ENCODE measurements at regions of chr16 and their contacts with region 1.

Region 1: GRCh38 chr16:20849587-20850390 is 43.5 kb downstream of the REXO5 start:
- DNase-seq: peak; percentile 45 to 67 (median 60)
- ATAC-seq: peak in 1 of 4 donors; percentile 32
- H3K4me3 ChIP-seq: no peak overlapping the region
- H3K27ac ChIP-seq: peak overlapping the region; percentile 53 to 88 (median 79)
- H3K4me1 ChIP-seq: peaks cover 9 to 65% (median 46%) of the 10 kb centered on the region in 12 donors
- H3K27me3 ChIP-seq: no peaks in the 10 kb centered on the region
- CTCF ChIP-seq: peak; percentile 93 to 99 (median 98)
- POLR2A ChIP-seq: no peak

Region 2: DNA sequence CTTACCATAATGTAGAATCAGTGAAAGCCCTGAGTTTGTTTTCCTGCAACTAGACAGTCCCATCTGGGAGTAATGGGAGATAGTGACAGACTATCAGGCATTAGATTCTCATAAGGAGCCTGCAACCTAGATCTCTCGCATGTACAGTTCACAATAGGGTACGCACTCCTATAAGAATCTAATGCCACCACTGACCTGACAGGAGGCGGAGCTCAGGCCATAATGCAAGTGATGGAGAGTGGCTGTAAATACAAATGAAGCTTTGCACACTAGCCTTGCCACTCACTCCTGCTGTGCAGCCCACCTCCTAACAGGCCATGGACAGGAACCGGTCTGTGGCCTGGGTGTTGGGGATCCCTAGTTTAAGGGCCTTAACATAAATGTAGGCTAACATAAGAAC is 129.5 kb before region 1 on chr16:
- intact Hi-C with region 1: no loop called
- DNase-seq: no peak
- ATAC-seq: no peak
- H3K4me3 ChIP-seq: no peak overlapping the region
- H3K27ac ChIP-seq: no peak overlapping the region
- H3K4me1 ChIP-seq: no peaks in the 10 kb centered on the region
- H3K27me3 ChIP-seq: no peaks in the 10 kb centered on the region
- CTCF ChIP-seq: no peak
- POLR2A ChIP-seq: no peak

Region 3: GRCh38 chr16:20774703-20775362 is 75.0 kb before region 1 on chr16:
- intact Hi-C with region 1: no loop called
- DNase-seq: peak; percentile 25 to 66 (median 41)
- ATAC-seq: peak in 3 of 4 donors; percentile 81 to 88 (median 86)
- H3K4me3 ChIP-seq: no peak overlapping the region
- H3K27ac ChIP-seq: no peak overlapping the region
- H3K4me1 ChIP-seq: no peaks in the 10 kb centered on the region
- H3K27me3 ChIP-seq: no peaks in the 10 kb centered on the region
- CTCF ChIP-seq: peak; percentile 33 to 58 (median 48)
- POLR2A ChIP-seq: no peak

Region 4: GRCh38 chr16:20806168-20807050 is 43.4 kb before region 1 on chr16 and contains the starts of genes ERI2 and REXO5:
- intact Hi-C with region 1: loop called in 3 of 10 experiments (anchors 2 to 5 kb)
- DNase-seq: peak; percentile 89 to 95 (median 93)
- ATAC-seq: peak; percentile 91 to 95 (median 94)
- H3K4me3 ChIP-seq: peak within 1 kb of the TSS; percentile 43 to 87 (median 74)
- H3K27ac ChIP-seq: peak within 1 kb of the TSS; percentile 86 to 97 (median 92)
- H3K4me1 ChIP-seq: peaks cover 0 to 25% (median 11%) of the 10 kb centered on the region in 12 donors
- H3K27me3 ChIP-seq: no peaks in the 10 kb centered on the region
- CTCF ChIP-seq: peak in 11 of 12 donors; percentile 23 to 62 (median 43)
- POLR2A ChIP-seq: peak in 1 of 2 donors; percentile 54
- total RNA-seq, gene ERI2: 5.7 to 15.2 (median 11.9) TPM
- total RNA-seq, gene REXO5: 2.8 to 7.5 (median 4.8) TPM

Region 5: GRCh38 chr16:20944861-20945574 is 95.2 kb after region 1 on chr16:
- intact Hi-C with region 1: loop called in 4 of 10 experiments (anchors 1 to 10 kb)
- DNase-seq: no peak
- ATAC-seq: peak in 2 of 4 donors; percentile 24 to 45
- H3K4me3 ChIP-seq: no peak overlapping the region
- H3K27ac ChIP-seq: no peak overlapping the region
- H3K4me1 ChIP-seq: peaks cover 0 to 15% (median 0%) of the 10 kb centered on the region in 12 donors
- H3K27me3 ChIP-seq: no peaks in the 10 kb centered on the region
- CTCF ChIP-seq: peak in 4 of 12 donors; percentile 11 to 34 (median 22)
- POLR2A ChIP-seq: no peak

Region 6: GRCh38 chr16:21083729-21084268 is 234.0 kb after region 1 on chr16:
- intact Hi-C with region 1: loop called (anchors 1 to 2 kb)
- DNase-seq: peak; percentile 62 to 76 (median 67)
- ATAC-seq: peak; percentile 83 to 98 (median 92)
- H3K4me3 ChIP-seq: no peak overlapping the region
- H3K27ac ChIP-seq: peak overlapping the region in 1 of 12 donors; percentile 17
- H3K4me1 ChIP-seq: peaks cover 0 to 5% (median 1%) of the 10 kb centered on the region in 12 donors
- H3K27me3 ChIP-seq: no peaks in the 10 kb centered on the region
- CTCF ChIP-seq: peak; percentile 66 to 84 (median 79)
- POLR2A ChIP-seq: no peak

Region 7: GRCh38 chr16:21101631-21102420 is 252.0 kb after region 1 on chr16:
- intact Hi-C with region 1: no loop called
- DNase-seq: peak in 2 of 5 donors; percentile 13 to 47
- ATAC-seq: peak in 3 of 4 donors; percentile 77 to 83 (median 79)
- H3K4me3 ChIP-seq: no peak overlapping the region
- H3K27ac ChIP-seq: no peak overlapping the region
- H3K4me1 ChIP-seq: peaks cover 0 to 9% (median 0%) of the 10 kb centered on the region in 12 donors
- H3K27me3 ChIP-seq: no peaks in the 10 kb centered on the region
- CTCF ChIP-seq: peak in 10 of 12 donors; percentile 22 to 59 (median 38)
- POLR2A ChIP-seq: no peak

Region 8: DNA sequence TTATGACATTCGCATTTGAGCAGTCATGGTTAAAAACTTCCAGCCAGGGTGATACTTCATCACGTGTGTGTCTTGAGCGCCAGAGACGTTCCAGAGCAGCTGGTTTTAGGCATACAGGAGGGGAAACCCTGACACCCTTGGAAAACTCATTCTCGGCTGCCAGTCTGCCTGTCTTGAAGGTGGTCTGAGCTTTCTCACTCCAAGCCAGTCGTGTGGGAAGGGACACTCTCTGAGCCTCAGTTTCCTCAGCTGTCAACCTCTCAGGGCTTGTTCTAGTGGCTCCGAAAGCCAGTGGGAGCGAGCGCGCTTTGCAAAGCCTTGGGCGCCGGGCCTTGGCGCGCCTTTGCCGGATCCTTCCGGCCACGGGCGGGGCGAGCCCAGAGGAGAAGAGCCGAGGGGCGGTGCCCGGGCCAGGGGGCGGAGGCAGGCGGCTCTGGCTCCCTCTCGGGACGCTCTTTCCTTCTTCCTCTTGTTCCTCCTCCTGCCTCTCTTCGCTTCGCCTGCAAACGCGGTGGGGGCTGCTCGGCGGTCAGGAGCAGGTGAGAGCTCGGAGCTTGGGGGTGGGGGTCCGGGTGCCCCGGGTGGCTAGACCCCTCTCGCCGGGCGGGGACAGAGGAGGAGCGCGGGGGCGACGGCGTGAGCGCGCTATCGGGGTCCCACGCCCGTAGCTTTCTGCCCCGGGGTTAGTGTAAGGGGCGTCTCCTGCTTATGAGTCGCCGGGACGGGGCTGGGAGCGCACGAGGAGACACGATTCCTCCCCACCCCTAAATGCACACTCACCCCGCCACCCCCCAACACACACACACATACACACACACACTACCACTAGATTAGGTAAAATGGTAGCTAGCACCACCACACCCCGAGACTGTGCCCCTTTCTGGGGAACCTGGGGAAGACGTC is 308.7 kb after region 1 on chr16 and contains the start of gene LDAF1:
- intact Hi-C with region 1: loop called in 3 of 10 experiments (anchors 2 to 5 kb)
- DNase-seq: peak; percentile 85 to 93 (median 88)
- ATAC-seq: peak; percentile 81 to 93 (median 90)
- H3K4me3 ChIP-seq: peak within 1 kb of the TSS; percentile 74 to 95 (median 88)
- H3K27ac ChIP-seq: peak within 1 kb of the TSS; percentile 72 to 94 (median 88)
- H3K4me1 ChIP-seq: peaks cover 17 to 59% (median 40%) of the 10 kb centered on the region in 12 donors
- H3K27me3 ChIP-seq: no peaks in the 10 kb centered on the region
- CTCF ChIP-seq: peak in 3 of 12 donors; percentile 12 to 14 (median 13)
- POLR2A ChIP-seq: peak in 1 of 2 donors; percentile 69
- total RNA-seq, gene LDAF1: 87.0 to 334 (median 162) TPM